Transverse colon (tissue), 4 donors: ENCODE measurements at regions of chr18 and their contacts with region 1.

Region 1: DNA sequence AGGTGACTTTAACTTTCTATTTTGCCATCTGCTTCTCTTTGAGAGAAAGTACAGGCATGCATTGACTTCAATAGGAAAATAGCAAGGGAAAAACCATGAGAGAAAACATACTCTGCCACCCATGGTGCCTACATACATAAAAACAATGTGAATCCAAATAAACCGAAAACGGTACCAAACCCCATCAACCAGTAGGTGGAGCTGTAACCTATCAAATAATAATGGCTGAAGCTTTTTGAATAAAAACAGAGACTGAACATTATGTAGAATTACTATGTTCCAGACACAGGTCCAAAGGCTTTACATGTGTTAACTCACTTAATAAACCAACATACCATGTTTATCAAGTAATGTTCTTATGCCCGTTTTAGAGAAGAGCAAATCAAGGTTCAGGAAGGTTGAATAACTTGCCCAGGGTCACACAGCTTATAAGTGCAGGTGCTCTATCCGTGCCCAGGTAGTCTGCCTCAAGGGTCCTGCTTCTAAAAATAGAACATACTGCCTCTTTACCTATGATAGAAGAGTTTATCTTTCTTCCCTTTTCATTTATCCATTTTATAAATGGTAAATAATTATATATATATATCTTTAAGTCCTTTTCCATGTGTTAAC is 293.9 kb upstream of the SYT4 start:
- DNase-seq: no peak
- H3K4me3 ChIP-seq: no peak overlapping the region
- H3K27ac ChIP-seq: no peak overlapping the region
- H3K4me1 ChIP-seq: no peaks in the 10 kb centered on the region
- H3K27me3 ChIP-seq: no peaks in the 10 kb centered on the region
- CTCF ChIP-seq: peak; percentile 57 to 72 (median 67)
- EP300 ChIP-seq: no peak
- POLR2A ChIP-seq: no peak

Region 2: GRCh38 chr18:42310956-42311355 is 1260.2 kb before region 1 on chr18:
- in situ Hi-C with region 1: loop called in 1 of 4 experiments (anchors 25 kb)
- intact Hi-C with region 1: no loop called
- DNase-seq: no peak
- H3K4me3 ChIP-seq: no peak overlapping the region
- H3K27ac ChIP-seq: no peak overlapping the region
- H3K4me1 ChIP-seq: no peaks in the 10 kb centered on the region
- H3K27me3 ChIP-seq: peaks cover 3% of the 10 kb centered on the region
- CTCF ChIP-seq: no peak
- EP300 ChIP-seq: no peak
- POLR2A ChIP-seq: no peak

Region 3: DNA sequence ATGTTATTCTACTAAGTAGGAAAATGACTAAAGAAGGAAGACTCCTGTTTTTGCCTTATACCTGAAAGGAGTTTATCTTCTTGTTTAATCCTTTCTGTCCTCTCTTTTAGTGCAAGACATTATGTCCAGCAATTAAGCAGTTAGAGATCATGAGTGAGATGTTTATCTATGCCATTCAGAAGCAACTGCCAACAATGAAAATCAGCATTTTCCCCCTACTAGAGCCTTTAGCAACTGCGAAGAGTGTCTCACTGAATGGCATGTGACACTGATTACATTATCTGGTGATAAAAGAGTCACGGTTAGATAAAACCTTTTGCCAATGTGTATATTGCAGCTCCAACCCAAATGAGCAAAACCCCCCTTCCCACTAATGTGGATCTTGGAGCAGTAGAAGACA is 63.8 kb after region 1 on chr18:
- in situ Hi-C with region 1: no loop called
- intact Hi-C with region 1: no loop called
- DNase-seq: no peak
- H3K4me3 ChIP-seq: no peak overlapping the region
- H3K27ac ChIP-seq: no peak overlapping the region
- H3K4me1 ChIP-seq: no peaks in the 10 kb centered on the region
- H3K27me3 ChIP-seq: no peaks in the 10 kb centered on the region
- CTCF ChIP-seq: no peak
- EP300 ChIP-seq: no peak
- POLR2A ChIP-seq: no peak